CD4-positive, alpha-beta T cell (primary cell): ENCODE measurements at regions of chr20 and their contacts with region 1.

Region 1: DNA sequence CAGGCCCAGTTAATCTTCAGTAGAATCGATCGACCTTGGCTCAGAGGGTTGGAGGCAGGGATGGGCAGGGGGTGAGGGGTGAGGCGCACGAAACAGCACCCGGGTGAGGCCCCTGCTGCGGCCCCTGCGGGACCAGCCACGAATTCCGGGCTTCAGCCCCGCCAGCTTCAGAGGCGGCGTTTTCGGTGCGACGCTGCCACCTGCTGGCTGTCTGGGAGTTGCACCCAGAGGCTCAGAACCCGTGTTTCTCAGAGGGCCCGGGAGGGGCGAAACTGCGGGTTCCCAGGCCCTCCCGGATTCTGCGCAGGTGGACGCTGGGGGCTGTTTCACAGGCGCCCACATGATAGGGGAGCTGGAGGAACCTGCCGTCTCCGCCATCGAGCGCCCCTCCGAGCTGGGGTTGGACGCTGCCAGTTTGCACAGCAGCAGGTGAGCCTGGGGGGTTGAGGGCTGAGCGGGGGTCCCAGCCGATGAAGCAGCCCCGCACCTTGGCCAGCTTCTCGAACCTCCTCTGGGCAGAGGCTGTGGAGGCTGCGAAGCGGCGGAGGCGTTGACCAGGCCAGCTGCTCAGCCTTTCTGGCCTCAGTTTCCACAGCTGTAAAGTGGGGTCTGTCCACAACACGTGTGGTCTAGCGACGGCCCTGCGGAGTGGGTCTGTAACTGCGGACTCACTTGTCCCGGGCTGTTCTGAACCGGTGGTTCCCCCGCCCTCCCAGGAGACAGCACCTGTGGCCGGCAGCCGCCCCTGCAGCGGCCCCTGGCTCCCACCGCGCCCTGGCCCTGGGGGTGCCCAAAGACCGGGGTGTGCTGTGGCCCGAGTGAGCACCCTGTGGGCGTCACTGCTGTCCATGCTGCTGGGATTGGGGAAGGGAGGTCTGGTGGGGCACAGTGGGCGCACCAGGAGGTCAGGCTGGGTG is 2.5 kb upstream of the BHLHE23 start:
- DNase-seq: peak; percentile 67 to 92 (median 82)
- ATAC-seq: peak; percentile 73
- H3K4me3 ChIP-seq: peak overlapping the region; percentile 41
- H3K4me3 Mint-ChIP-seq: peak overlapping the region; percentile 88
- H3K27ac ChIP-seq: no peak overlapping the region
- H3K27ac Mint-ChIP-seq: no peak overlapping the region
- H3K4me1 ChIP-seq: peaks cover 63% of the 10 kb centered on the region
- H3K4me1 Mint-ChIP-seq: peaks cover 24% of the 10 kb centered on the region
- H3K27me3 ChIP-seq: peaks cover 44 to 46% of the 10 kb centered on the region in 2 experiments
- H3K27me3 Mint-ChIP-seq: peaks cover 73% of the 10 kb centered on the region
- CTCF ChIP-seq: peak; percentile 94

Region 2: GRCh38 chr20:62668441-62669027 is 340.8 kb before region 1 on chr20:
- CTCF ChIA-PET with region 1: no interaction called
- POLR2A ChIA-PET with region 1: no interaction called
- intact Hi-C with region 1: loop called in 1 of 2 experiments (anchors 5 kb)
- DNase-seq: peak in 11 of 14 experiments; percentile 24 to 72 (median 42)
- ATAC-seq: peak; percentile 52
- H3K4me3 ChIP-seq: no peak overlapping the region
- H3K4me3 Mint-ChIP-seq: no peak overlapping the region
- H3K27ac ChIP-seq: no peak overlapping the region
- H3K27ac Mint-ChIP-seq: no peak overlapping the region
- H3K4me1 ChIP-seq: no peaks in the 10 kb centered on the region
- H3K4me1 Mint-ChIP-seq: no peaks in the 10 kb centered on the region
- H3K27me3 ChIP-seq: no peaks in the 10 kb centered on the region
- H3K27me3 Mint-ChIP-seq: no peaks in the 10 kb centered on the region
- CTCF ChIP-seq: peak; percentile 83

Region 3: DNA sequence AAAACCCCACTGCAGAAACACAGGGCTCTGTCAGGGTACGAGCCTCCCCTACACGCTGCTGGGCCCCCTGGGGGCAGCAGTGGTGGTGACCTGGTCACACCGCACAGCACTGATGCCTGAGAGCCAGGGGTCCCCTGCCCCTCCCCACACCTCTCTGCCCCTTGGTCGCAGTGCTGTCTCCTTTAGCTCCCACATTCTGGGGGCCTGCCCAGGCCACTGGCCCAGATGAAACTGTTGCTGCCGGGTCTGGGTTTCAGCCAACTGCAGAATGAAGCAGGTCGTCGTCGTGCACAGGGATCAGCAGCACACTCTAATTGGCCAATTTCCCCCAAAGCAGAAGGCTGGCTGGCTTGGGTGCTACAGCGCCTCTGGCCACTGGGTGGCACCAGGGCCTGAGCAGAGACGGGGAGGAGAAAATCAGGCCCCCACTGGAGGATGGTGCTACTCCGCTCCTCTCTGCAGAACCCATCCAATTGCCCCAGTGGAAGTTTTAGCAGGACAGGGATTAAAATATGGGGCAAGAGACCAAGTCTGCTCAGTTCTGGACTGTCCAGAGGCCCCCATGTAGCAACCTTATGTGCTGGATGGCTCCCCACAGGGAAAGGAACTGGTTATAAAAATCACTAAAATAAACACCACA is 109.1 kb before region 1 on chr20:
- CTCF ChIA-PET with region 1: interaction called, 5 read pairs
- POLR2A ChIA-PET with region 1: interaction called, 6 read pairs
- intact Hi-C with region 1: loop called (anchors 1 kb)
- DNase-seq: peak; percentile 63 to 89 (median 76)
- ATAC-seq: peak; percentile 89
- H3K4me3 ChIP-seq: no peak overlapping the region
- H3K4me3 Mint-ChIP-seq: peak overlapping the region; percentile 71
- H3K27ac ChIP-seq: peak overlapping the region; percentile 8 to 47
- H3K27ac Mint-ChIP-seq: peak overlapping the region; percentile 92
- H3K4me1 ChIP-seq: peaks cover 29% of the 10 kb centered on the region
- H3K4me1 Mint-ChIP-seq: peaks cover 40% of the 10 kb centered on the region
- H3K27me3 ChIP-seq: no peaks in the 10 kb centered on the region
- H3K27me3 Mint-ChIP-seq: no peaks in the 10 kb centered on the region
- CTCF ChIP-seq: peak; percentile 96

Region 4: DNA sequence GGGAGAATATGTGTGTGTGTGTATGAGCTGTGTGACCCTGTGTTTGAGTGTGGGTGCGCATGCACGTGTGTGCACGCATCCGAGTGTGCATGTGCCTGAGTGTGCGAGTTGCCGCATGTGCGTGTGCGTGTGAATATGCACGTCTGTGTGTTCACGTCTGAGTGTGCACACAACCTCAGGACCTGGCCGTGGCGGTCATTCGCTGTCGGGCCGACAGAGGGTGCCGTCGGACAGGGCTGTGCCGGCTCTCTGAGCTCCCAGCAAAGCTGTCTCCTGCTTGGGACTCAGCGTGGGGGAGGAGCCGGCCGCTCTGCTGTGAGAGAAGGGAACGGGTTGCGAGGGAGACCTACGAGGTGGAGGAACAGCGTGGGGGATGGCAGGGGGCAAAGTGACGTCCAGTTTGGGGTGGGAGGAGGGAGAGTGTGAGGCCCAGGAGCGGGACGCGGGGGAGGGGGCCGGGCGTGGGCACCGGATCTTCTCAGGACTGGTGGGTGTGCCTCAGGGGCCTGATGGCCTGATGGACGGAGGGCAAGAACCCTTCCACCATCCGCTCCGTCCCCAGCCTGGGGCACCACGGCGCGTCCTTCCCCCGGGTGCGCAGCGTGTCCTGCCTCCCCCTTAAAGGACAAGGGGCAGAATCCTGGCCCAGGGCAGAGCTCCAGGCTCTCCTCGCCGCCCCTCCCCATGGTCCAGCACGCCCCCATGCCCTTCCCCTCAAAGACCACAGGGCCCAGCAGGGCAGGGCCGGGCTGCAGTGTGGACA is 36.9 kb before region 1 on chr20:
- CTCF ChIA-PET with region 1: interaction called, 24 read pairs
- POLR2A ChIA-PET with region 1: interaction called, 8 read pairs
- intact Hi-C with region 1: loop called (anchors 1 kb)
- DNase-seq: peak; percentile 77 to 90 (median 86)
- ATAC-seq: peak; percentile 100
- H3K4me3 ChIP-seq: peak overlapping the region; percentile 35
- H3K4me3 Mint-ChIP-seq: peak overlapping the region; percentile 76
- H3K27ac ChIP-seq: no peak overlapping the region
- H3K27ac Mint-ChIP-seq: no peak overlapping the region
- H3K4me1 ChIP-seq: peaks cover 19% of the 10 kb centered on the region
- H3K4me1 Mint-ChIP-seq: peaks cover 23% of the 10 kb centered on the region
- H3K27me3 ChIP-seq: peaks cover 38 to 44% of the 10 kb centered on the region in 2 experiments
- H3K27me3 Mint-ChIP-seq: peaks cover 53% of the 10 kb centered on the region
- CTCF ChIP-seq: peak; percentile 81

Region 5: DNA sequence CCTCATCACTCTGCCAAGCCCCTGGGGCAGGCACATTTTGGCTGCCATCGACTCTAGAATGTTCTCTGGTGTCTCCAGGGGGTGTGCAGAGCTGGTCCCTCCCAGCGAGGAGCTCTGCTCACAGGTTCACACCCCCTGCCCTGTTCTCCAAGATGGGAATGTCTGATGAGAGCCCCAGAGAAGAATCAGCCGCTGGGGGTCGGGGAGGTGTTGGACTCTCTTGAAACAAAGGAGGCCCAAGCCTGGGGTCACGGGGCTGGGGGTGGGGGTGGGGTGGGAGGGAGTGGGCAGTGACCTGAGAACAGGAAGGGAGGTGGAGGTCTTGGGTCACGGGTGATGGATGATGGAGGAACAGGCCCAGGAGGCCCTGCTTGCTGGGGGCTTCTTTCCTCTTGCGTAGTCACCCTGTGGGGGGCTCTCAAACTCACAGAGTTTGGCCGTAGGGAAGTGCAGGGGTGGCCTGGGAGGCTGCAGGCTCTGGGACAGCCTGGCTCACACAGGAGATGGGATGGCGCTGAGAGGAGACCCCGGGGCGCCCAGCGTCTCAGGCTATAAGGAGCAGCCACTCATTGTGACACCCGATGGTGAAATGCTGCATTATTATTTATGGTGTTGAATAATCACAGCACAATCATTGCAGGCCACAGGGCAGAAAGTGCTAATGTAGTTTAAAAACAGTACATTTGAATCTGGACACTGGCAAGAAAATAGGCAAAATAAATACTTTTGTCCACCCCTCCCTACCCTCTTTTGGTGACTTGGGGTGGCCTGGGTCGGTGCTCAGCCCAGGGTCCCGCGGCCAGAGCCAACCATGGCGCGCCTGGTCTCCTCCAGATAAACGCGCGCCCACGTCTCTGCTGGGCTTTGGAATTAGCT is 24.6 kb after region 1 on chr20:
- CTCF ChIA-PET with region 1: no interaction called
- POLR2A ChIA-PET with region 1: no interaction called
- intact Hi-C with region 1: no loop called
- DNase-seq: no peak
- ATAC-seq: no peak
- H3K4me3 ChIP-seq: peak overlapping the region; percentile 34
- H3K4me3 Mint-ChIP-seq: no peak overlapping the region
- H3K27ac ChIP-seq: no peak overlapping the region
- H3K27ac Mint-ChIP-seq: no peak overlapping the region
- H3K4me1 ChIP-seq: peaks cover 16% of the 10 kb centered on the region
- H3K4me1 Mint-ChIP-seq: peaks cover 10% of the 10 kb centered on the region
- H3K27me3 ChIP-seq: peaks cover 0 to 7% of the 10 kb centered on the region in 2 experiments
- H3K27me3 Mint-ChIP-seq: peaks cover 38% of the 10 kb centered on the region
- CTCF ChIP-seq: no peak